ENCODE measurements at regions of chr2 and their contacts with region 1.

Region 1: DNA sequence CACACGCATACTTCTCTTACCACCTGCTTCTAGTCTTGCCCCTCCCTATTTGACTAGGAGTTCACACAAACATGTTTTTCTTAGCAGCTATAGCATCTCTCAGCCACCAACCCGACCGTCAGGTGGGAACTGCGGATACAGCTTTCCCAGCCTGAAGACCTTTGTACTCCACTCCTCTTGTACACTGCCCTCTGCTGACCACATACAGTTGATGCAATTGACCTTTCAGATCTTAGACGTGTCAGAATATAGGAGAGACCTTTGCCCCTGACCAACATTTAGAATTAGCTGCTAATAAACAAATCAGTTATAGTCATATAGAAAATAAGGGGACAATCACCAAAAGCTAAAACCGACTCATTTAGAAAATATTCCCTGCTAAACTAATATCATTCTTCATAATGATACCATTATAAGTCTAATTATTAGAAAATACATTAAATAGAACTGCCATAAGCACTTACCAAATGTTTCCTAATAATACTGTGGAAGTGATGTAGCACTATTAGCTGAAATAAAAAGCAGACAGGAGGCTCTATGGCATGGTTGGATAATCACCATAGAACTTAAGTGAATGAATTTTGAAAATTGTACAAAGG is 208.4 kb downstream of the RAD51AP2 start:
- DNase-seq: no peak
- ATAC-seq: peak; percentile 69
- H3K4me3 Mint-ChIP-seq: no peak overlapping the region
- H3K27ac Mint-ChIP-seq: no peak overlapping the region
- H3K4me1 Mint-ChIP-seq: peaks cover 2% of the 10 kb centered on the region
- H3K27me3 Mint-ChIP-seq: peaks cover 7% of the 10 kb centered on the region
- CTCF ChIP-seq: no peak

Region 2: GRCh38 chr2:16608661-16609643 is 700.9 kb before region 1 on chr2:
- CTCF ChIA-PET with region 1: no interaction called
- POLR2A ChIA-PET with region 1: no interaction called
- intact Hi-C with region 1: loop called (anchors 10 kb)
- DNase-seq: peak; percentile 79
- ATAC-seq: peak; percentile 92
- H3K4me3 Mint-ChIP-seq: peak overlapping the region; percentile 79
- H3K27ac Mint-ChIP-seq: peak overlapping the region; percentile 53
- H3K4me1 Mint-ChIP-seq: peaks cover 31% of the 10 kb centered on the region
- H3K27me3 Mint-ChIP-seq: no peaks in the 10 kb centered on the region
- CTCF ChIP-seq: peak; percentile 83

Region 3: DNA sequence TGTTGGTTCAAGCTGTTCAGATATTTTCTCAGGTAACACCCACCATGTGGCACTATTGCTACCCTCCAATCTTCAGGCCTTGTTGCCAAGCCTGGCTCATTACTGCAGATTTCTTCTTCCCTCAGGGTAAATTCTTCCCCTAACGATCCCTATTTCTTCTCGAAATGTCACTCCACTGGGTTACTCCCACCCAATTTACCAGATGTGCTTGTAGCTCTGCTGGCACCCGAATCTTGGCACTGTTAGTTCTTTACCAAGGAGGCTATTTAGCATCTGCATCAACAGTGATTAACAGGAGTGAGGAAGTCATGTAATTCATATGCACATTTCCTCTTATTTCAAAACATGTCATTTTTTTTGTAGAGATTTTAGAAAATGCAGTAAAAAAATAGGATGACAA is 427.1 kb before region 1 on chr2:
- CTCF ChIA-PET with region 1: interaction called, 3 read pairs
- POLR2A ChIA-PET with region 1: no interaction called
- intact Hi-C with region 1: loop called (anchors 5 kb)
- DNase-seq: no peak
- ATAC-seq: no peak
- H3K4me3 Mint-ChIP-seq: no peak overlapping the region
- H3K27ac Mint-ChIP-seq: no peak overlapping the region
- H3K4me1 Mint-ChIP-seq: no peaks in the 10 kb centered on the region
- H3K27me3 Mint-ChIP-seq: no peaks in the 10 kb centered on the region
- CTCF ChIP-seq: no peak

Region 4: GRCh38 chr2:17171446-17172049 is 138.3 kb before region 1 on chr2:
- CTCF ChIA-PET with region 1: interaction called, 10 read pairs
- POLR2A ChIA-PET with region 1: no interaction called
- intact Hi-C with region 1: loop called (anchors 2 kb)
- DNase-seq: no peak
- ATAC-seq: peak; percentile 62
- H3K4me3 Mint-ChIP-seq: no peak overlapping the region
- H3K27ac Mint-ChIP-seq: no peak overlapping the region
- H3K4me1 Mint-ChIP-seq: peaks cover 23% of the 10 kb centered on the region
- H3K27me3 Mint-ChIP-seq: no peaks in the 10 kb centered on the region
- CTCF ChIP-seq: no peak

Region 5: DNA sequence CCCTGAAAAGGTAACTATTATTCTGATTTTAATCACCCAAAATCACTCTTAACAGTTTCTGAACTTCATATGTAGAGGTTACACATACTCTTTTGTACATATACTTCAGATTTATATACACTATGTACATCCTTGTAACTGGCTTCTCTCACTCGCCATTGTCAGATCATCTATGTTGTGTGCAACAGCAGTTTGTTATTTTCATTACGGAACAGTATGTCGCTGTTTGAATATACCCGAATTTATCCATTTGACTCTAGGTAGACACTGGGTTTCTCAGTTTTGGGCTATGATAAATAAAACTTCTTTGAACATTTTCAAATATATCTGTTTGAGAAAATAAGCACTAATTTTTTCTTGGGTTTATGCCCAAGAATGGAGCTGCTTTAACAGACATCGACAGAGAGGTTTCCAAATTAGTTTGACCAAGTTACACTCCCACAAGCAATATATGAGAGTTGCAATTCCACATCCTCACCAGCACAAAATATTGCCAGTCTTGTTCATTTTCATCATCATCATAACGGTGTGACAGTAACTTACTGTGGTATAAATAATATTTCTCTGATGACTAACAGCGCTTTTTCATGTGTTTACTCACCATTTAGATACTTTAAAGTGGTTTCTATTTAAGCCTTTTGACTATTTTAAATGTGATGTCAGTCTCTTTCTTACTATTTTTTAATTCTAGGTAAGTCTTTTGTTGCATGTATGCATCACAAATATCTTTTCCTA is 362.9 kb after region 1 on chr2:
- CTCF ChIA-PET with region 1: interaction called, 6 read pairs
- POLR2A ChIA-PET with region 1: no interaction called
- intact Hi-C with region 1: loop called (anchors 1 kb)
- DNase-seq: no peak
- ATAC-seq: no peak
- H3K4me3 Mint-ChIP-seq: no peak overlapping the region
- H3K27ac Mint-ChIP-seq: no peak overlapping the region
- H3K4me1 Mint-ChIP-seq: no peaks in the 10 kb centered on the region
- H3K27me3 Mint-ChIP-seq: no peaks in the 10 kb centered on the region
- CTCF ChIP-seq: no peak